ENCODE measurements at regions of chr4 and their contacts with region 1.

Region 1: GRCh38 chr4:99816545-99817308 is at the start of gene DAPP1:
- DNase-seq: peak; percentile 48 to 91 (median 70)
- ATAC-seq: peak; percentile 97
- H3K4me3 ChIP-seq: peak within 1 kb of the TSS; percentile 36 to 49
- H3K4me3 Mint-ChIP-seq: peak within 1 kb of the TSS; percentile 85
- H3K27ac ChIP-seq: peak within 1 kb of the TSS; percentile 22 to 53
- H3K27ac Mint-ChIP-seq: peak within 1 kb of the TSS; percentile 89
- H3K4me1 ChIP-seq: peaks cover 38% of the 10 kb centered on the region
- H3K4me1 Mint-ChIP-seq: peaks cover 56% of the 10 kb centered on the region
- H3K27me3 ChIP-seq: no peaks in the 10 kb centered on the region
- H3K27me3 Mint-ChIP-seq: no peaks in the 10 kb centered on the region
- CTCF ChIP-seq: no peak
- total RNA-seq, gene DAPP1: 3.2 to 3.6 TPM

Region 2: GRCh38 chr4:99835942-99836341 is 19.2 kb after region 1 on chr4:
- CTCF ChIA-PET with region 1: no interaction called
- POLR2A ChIA-PET with region 1: interaction called, 3 read pairs
- intact Hi-C with region 1: loop called in 1 of 2 experiments (anchors 2 kb)
- DNase-seq: no peak
- ATAC-seq: no peak
- H3K4me3 ChIP-seq: no peak overlapping the region
- H3K4me3 Mint-ChIP-seq: no peak overlapping the region
- H3K27ac ChIP-seq: no peak overlapping the region
- H3K27ac Mint-ChIP-seq: no peak overlapping the region
- H3K4me1 ChIP-seq: no peaks in the 10 kb centered on the region
- H3K4me1 Mint-ChIP-seq: no peaks in the 10 kb centered on the region
- H3K27me3 ChIP-seq: no peaks in the 10 kb centered on the region
- H3K27me3 Mint-ChIP-seq: no peaks in the 10 kb centered on the region
- CTCF ChIP-seq: no peak

Region 3: DNA sequence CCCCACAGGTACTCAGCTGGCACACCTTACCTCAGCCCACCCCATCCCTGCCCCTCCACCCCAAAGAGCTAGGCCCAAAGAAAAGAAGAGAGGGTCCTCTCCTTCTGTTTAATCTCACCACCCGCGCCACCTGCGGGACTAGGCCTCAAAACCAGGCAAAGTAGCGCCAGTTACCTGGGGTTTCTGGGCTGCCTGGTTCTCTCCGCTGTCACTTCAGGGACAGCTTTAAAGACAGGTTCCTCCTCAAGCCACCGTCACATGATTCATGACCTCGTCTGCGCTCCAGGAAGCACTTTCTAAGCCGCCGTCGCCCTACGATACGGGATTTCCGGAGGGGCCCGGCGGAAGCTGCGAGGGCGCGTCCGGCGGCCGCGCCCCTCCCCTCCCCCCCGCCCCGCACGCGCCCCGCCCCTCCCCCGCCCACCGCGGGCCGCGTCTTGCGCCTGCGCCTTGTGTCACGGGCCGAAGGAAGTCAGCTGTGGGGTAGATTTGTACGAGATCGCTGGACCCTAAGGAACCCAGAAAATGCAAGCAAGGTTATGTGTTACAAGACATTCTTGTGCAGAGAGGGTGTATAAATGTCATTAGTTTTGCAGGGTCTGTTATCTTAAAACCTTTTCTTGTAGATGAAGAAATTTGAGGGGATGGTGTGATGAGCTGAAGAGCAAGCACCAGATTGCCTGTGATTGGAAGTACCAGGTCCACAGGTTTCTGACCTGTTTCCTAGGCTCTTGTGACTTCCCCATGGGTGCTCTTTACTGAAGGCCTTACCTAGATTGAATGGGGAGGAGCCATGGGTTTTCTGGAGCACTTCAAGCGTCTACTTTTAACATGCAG is 77.7 kb after region 1 on chr4 and contains the start of gene LAMTOR3:
- CTCF ChIA-PET with region 1: interaction called, 6 read pairs
- POLR2A ChIA-PET with region 1: interaction called, 7 read pairs
- intact Hi-C with region 1: loop called in 1 of 2 experiments (anchors 2 kb)
- DNase-seq: peak; percentile 80 to 97 (median 88)
- ATAC-seq: peak; percentile 94
- H3K4me3 ChIP-seq: peak within 1 kb of the TSS; percentile 68 to 80
- H3K4me3 Mint-ChIP-seq: peak within 1 kb of the TSS; percentile 97
- H3K27ac ChIP-seq: peak within 1 kb of the TSS; percentile 77 to 87
- H3K27ac Mint-ChIP-seq: peak within 1 kb of the TSS; percentile 98
- H3K4me1 ChIP-seq: peaks cover 30% of the 10 kb centered on the region
- H3K4me1 Mint-ChIP-seq: peaks cover 49% of the 10 kb centered on the region
- H3K27me3 ChIP-seq: no peaks in the 10 kb centered on the region
- H3K27me3 Mint-ChIP-seq: no peaks in the 10 kb centered on the region
- CTCF ChIP-seq: no peak
- total RNA-seq, gene LAMTOR3: 29.3 to 32.4 TPM

Region 4: GRCh38 chr4:100060765-100061416 is 244.2 kb after region 1 on chr4:
- CTCF ChIA-PET with region 1: interaction called, 4 read pairs
- POLR2A ChIA-PET with region 1: no interaction called
- intact Hi-C with region 1: loop called in 1 of 2 experiments (anchors 10 kb)
- DNase-seq: no peak
- ATAC-seq: no peak
- H3K4me3 ChIP-seq: no peak overlapping the region
- H3K4me3 Mint-ChIP-seq: no peak overlapping the region
- H3K27ac ChIP-seq: no peak overlapping the region
- H3K27ac Mint-ChIP-seq: no peak overlapping the region
- H3K4me1 ChIP-seq: no peaks in the 10 kb centered on the region
- H3K4me1 Mint-ChIP-seq: no peaks in the 10 kb centered on the region
- H3K27me3 ChIP-seq: peaks cover 0 to 6% of the 10 kb centered on the region in 2 experiments
- H3K27me3 Mint-ChIP-seq: no peaks in the 10 kb centered on the region
- CTCF ChIP-seq: no peak

Measured in CD8-positive, alpha-beta T cell (primary cell).